ENCODE measurements at regions of chr10 and their contacts with region 1.

Region 1: GRCh38 chr10:70363971-70364771 is 18.3 kb downstream of the LRRC20 start:
- DNase-seq: peak; percentile 76 to 92
- H3K4me3 ChIP-seq: no peak overlapping the region
- H3K27ac ChIP-seq: peak overlapping the region; percentile 71; the same call in 1 of the 2 replicates
- H3K4me1 ChIP-seq: peaks cover under 1 to 11% (median 3%) of the 10 kb centered on the region in 4 experiments; a peak in 5 of 7 replicates
- H3K27me3 ChIP-seq: no peaks in the 10 kb centered on the region
- CTCF ChIP-seq: peak; percentile 80 to 99 (median 97)
- EP300 ChIP-seq: peak in 1 of 2 experiments; percentile 32; a peak in 1 of 3 replicates
- POLR2A ChIP-seq: no peak
- RAD21 ChIP-seq: peak; percentile 96 to 98

Region 2: DNA sequence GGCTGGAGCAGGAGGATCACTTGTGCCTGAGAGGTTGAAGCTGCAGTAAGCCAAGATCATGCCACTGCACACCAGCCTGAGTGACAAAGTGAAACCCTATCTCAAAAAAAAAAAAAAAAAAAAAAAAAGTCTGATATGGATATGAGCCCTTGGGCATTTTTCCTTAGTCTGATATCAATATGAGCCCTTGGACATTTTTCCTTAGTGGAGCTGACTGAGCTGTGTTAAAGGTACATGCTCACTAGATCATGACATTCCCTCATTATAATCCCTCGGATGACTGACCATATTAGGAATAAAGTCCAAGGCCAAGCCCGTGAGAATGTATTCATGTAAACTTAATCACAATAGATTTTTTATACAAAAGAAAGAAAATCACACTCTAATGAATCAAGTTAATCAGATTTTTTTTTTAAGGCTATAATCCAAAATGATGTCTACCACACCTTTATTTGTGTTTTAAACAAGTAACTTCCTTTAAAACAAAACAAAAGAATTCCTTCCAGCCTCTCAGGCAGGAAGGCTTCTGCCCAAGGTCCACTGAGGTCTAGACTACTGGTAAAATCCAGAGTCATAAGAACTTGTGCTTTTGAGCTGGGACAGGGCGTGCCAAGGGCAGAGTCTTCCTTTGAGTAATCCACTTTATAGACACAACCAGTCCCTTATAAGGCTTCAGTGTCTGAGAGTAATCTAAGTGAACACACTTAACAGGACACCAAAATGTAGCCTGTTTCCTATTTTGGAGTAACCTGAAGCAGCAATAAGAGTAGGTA is 136.4 kb before region 1 on chr10:
- CTCF ChIA-PET with region 1: interaction called, 157 read pairs
- POLR2A ChIA-PET with region 1: no interaction called
- DNase-seq: no peak
- H3K4me3 ChIP-seq: no peak overlapping the region
- H3K27ac ChIP-seq: no peak overlapping the region
- H3K4me1 ChIP-seq: peaks cover 0 to 4% (median 2%) of the 10 kb centered on the region in 4 experiments; a peak in 4 of 7 replicates
- H3K27me3 ChIP-seq: peaks cover 0 to 4% (median 0%) of the 10 kb centered on the region in 4 experiments; a peak in 2 of 7 replicates
- CTCF ChIP-seq: no peak
- EP300 ChIP-seq: no peak
- POLR2A ChIP-seq: no peak
- RAD21 ChIP-seq: no peak

Region 3: DNA sequence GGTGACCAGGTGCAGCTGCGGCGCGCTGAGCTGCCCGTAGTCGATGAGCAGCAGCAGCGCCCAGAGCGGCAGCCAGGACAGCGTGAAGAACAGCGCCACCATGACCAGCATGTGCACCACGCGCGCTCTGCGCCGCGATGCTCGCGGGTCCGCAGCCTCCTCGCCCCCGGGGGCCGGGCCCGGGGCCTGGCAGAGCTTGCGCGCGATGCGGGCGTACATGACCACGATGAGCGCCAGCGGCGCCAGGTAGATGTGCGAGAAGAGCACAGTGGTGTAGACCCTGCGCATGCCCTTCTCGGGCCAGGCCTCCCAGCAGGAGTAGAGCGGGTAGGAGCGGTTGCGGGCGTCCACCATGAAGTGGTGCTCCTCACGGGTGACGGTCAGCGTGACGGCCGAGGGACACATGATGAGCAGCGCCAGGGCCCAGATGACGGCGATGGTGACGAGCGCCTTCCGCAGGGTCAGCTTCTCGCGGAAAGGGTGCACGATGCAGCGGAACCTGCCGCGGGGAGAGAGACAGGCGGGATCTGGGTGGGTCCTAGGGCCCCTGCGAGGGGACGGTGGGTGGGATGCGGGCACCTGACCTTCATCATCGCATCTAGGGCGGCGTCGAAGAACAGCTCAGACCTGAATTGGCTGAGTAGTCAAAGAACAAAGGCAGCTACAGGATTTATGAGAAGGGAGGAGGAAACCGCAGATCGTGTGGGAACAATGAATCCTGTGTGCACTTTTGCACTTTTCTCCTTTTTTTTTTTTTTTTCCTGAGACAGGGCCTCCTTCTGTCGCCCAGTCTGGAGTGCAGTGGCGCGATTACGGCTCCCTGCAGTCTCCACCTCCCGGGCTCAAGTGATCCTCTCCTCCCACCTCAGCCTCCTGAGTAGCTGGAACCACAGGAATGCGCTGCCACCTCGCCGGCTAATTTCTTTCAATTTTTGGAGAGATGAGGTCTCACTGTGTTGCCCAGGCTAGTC is 108.6 kb before region 1 on chr10:
- CTCF ChIA-PET with region 1: interaction called, 329 read pairs
- POLR2A ChIA-PET with region 1: no interaction called
- DNase-seq: no peak
- H3K4me3 ChIP-seq: no peak overlapping the region
- H3K27ac ChIP-seq: no peak overlapping the region
- H3K4me1 ChIP-seq: peaks cover 0 to 2% (median 0%) of the 10 kb centered on the region in 4 experiments; a peak in 1 of 7 replicates
- H3K27me3 ChIP-seq: no peaks in the 10 kb centered on the region
- CTCF ChIP-seq: no peak
- EP300 ChIP-seq: no peak
- POLR2A ChIP-seq: no peak
- RAD21 ChIP-seq: no peak

Region 4: GRCh38 chr10:70324339-70324861 is 39.8 kb before region 1 on chr10:
- CTCF ChIA-PET with region 1: interaction called, 34 read pairs
- POLR2A ChIA-PET with region 1: no interaction called
- DNase-seq: no peak
- H3K4me3 ChIP-seq: no peak overlapping the region
- H3K27ac ChIP-seq: no peak overlapping the region
- H3K4me1 ChIP-seq: peaks cover 0 to 17% (median 9%) of the 10 kb centered on the region in 4 experiments; a peak in 6 of 7 replicates
- H3K27me3 ChIP-seq: no peaks in the 10 kb centered on the region
- CTCF ChIP-seq: no peak
- EP300 ChIP-seq: no peak
- POLR2A ChIP-seq: no peak
- RAD21 ChIP-seq: no peak

Region 5: GRCh38 chr10:70381471-70382421 is 17.6 kb after region 1 on chr10:
- CTCF ChIA-PET with region 1: interaction called, 60 read pairs
- POLR2A ChIA-PET with region 1: interaction called, 5 read pairs
- DNase-seq: peak in 1 of 2 experiments; percentile 89
- H3K4me3 ChIP-seq: peak overlapping the region; percentile 76 to 88 (median 80)
- H3K27ac ChIP-seq: peak overlapping the region; percentile 43; the same call in 1 of the 2 replicates
- H3K4me1 ChIP-seq: peaks cover 0 to 7% (median under 1%) of the 10 kb centered on the region in 4 experiments; a peak in 4 of 7 replicates
- H3K27me3 ChIP-seq: peaks cover 0 to 18% (median 7%) of the 10 kb centered on the region in 4 experiments; a peak in 4 of 7 replicates
- CTCF ChIP-seq: no peak
- EP300 ChIP-seq: no peak
- POLR2A ChIP-seq: no peak
- RAD21 ChIP-seq: no peak

Region 6: GRCh38 chr10:70418229-70418628 is 54.1 kb after region 1 on chr10:
- CTCF ChIA-PET with region 1: no interaction called
- POLR2A ChIA-PET with region 1: no interaction called
- DNase-seq: no peak
- H3K4me3 ChIP-seq: no peak overlapping the region
- H3K27ac ChIP-seq: no peak overlapping the region
- H3K4me1 ChIP-seq: peaks cover 0 to 2% (median 0%) of the 10 kb centered on the region in 4 experiments; a peak in 1 of 7 replicates
- H3K27me3 ChIP-seq: no peaks in the 10 kb centered on the region
- CTCF ChIP-seq: no peak
- EP300 ChIP-seq: no peak
- POLR2A ChIP-seq: no peak; a peak in 1 of 3 replicates
- RAD21 ChIP-seq: no peak

Region 7: DNA sequence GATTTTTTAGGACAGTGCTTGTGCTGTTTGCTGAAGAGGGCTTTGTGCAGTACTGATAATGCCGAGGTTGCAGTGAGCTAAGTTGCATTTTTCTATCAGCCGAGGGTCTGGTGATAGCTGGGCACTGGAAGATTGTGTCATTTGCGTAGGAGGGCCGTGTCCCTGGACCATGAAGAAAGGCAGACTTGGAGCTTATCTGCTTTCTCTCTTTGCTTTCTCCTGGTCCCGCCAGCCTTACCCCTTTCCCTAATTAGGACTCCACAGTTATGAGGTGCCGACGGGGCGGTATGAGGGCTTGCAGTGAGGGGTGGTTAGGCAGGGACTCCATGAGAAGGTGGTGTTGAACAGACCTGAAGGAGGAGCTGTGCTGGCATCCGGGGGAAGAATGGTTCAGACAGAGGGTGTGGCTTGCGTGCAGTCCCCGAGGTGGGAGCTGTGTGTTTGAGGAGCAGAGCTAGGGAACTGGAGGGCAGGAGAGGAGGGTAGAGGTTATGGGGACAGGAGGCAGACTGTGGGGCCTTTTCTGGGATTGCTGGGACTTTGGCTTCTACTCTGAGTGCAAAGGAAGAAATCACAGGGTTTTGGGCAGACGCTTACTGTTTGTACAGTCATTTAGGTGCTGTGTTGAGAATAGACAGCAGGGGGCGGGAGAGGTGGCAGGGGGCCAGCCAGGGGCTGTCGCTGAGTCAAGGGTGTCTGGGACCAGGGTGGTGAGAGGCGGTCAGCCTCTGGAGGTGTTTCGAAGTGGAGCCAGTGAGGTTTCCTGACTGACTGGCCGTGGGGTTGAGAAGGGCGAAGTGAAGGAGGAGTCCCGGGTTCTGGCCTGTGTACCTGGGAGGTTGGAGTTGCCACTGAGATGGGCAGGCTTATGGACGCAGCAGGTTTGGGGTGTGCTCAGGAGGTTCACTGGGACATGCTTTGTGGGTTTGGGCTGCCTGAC is 195.0 kb after region 1 on chr10:
- CTCF ChIA-PET with region 1: no interaction called
- POLR2A ChIA-PET with region 1: no interaction called
- DNase-seq: peak in 1 of 2 experiments; percentile 80
- H3K4me3 ChIP-seq: no peak overlapping the region
- H3K27ac ChIP-seq: no peak overlapping the region
- H3K4me1 ChIP-seq: peaks cover 0 to 6% (median 3%) of the 10 kb centered on the region in 4 experiments; a peak in 4 of 7 replicates
- H3K27me3 ChIP-seq: no peaks in the 10 kb centered on the region
- CTCF ChIP-seq: peak in 2 of 3 experiments; percentile 44 to 62; a peak in 3 of 4 replicates
- EP300 ChIP-seq: no peak
- POLR2A ChIP-seq: no peak
- RAD21 ChIP-seq: peak; percentile 37 to 63; a peak in 3 of 4 replicates

Measured in H1 (cell line).